ENCODE measurements at regions of chr11 and their contacts with region 1.

Region 1: GRCh38 chr11:8092587-8093424 is 11.8 kb downstream of the TUB start:
- DNase-seq: peak; percentile 48
- H3K4me3 ChIP-seq: no peak overlapping the region
- H3K27ac ChIP-seq: no peak overlapping the region
- H3K4me1 ChIP-seq: no peaks in the 10 kb centered on the region
- H3K27me3 ChIP-seq: no peaks in the 10 kb centered on the region
- CTCF ChIP-seq: peak; percentile 80 to 84

Region 2: DNA sequence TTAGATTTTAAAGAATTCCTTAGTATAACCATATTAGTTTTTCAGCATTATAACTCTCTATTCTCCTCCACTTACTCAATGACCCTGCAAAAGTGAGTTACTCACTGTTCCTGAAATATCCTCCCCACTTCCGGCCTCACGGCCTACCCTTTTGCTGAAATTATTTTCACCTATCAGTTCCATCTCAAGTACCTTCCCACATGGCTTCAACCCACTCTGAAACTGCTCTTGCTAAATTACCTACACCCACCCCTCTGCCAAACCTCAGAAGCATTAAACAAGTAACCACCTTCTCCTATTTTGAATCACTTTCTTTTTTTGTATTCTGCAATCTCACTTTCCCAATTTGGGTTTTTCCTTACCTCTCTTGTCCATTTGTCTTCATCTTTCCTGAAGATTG is 333.8 kb before region 1 on chr11:
- CTCF ChIA-PET with region 1: no interaction called
- dilution Hi-C with region 1: no loop called
- in situ Hi-C with region 1: no loop called
- intact Hi-C with region 1: no loop called
- DNase-seq: peak; percentile 28
- H3K4me3 ChIP-seq: no peak overlapping the region
- H3K27ac ChIP-seq: no peak overlapping the region
- H3K4me1 ChIP-seq: peaks cover 4% of the 10 kb centered on the region
- H3K27me3 ChIP-seq: no peaks in the 10 kb centered on the region
- CTCF ChIP-seq: no peak

Region 3: DNA sequence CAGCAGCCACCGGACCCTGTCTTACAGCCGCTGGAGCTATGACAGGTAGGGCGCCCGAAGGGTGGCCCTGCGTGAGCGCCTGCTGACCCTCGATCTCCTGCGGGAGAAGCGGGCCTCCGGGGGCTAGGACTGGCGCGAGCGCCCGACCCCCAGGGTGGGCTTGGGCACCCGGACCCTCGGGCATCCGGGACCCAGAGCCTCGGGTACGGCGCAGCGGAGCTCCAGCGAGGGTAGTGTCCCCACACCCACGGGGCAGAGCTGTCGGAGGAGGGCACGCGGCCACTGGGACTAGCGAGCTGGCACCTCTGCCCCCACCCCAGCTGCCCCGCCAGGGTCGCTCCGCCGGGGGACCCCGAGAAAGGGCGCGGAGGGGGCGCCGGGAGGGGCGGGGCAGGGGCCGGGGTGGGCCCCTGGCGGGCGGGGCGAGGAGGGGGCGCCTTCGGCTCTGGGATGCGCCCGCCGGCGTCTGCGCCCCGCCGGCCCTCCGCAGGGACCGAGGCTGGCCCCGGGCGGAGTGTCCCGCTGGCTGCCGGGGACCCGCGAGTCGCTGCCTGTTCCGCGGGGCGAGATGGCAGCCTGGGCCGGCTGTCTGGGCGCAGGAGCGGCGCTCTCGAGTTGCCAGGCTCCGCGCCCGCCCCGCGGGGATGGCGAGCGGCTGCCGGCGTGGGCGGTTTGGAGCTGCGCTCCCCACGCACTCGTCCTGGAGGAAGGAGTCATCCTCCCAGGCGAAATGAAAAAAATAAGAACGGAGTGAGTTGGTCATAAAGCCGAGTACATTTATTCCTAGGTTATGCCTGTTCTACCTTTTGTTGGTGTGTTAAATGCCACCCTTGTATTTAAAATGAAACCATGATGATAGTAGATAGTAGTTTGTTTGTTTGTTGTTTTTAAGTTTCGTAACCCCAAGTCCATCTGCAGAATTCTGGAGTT is 73.2 kb before region 1 on chr11:
- CTCF ChIA-PET with region 1: no interaction called
- dilution Hi-C with region 1: no loop called
- in situ Hi-C with region 1: loop called in 1 of 2 experiments (anchors 5 kb)
- intact Hi-C with region 1: no loop called
- DNase-seq: peak; percentile 34
- H3K4me3 ChIP-seq: peak overlapping the region; percentile 39 to 51 (median 40)
- H3K27ac ChIP-seq: no peak overlapping the region
- H3K4me1 ChIP-seq: peaks cover 19% of the 10 kb centered on the region
- H3K27me3 ChIP-seq: no peaks in the 10 kb centered on the region
- CTCF ChIP-seq: no peak

Region 4: DNA sequence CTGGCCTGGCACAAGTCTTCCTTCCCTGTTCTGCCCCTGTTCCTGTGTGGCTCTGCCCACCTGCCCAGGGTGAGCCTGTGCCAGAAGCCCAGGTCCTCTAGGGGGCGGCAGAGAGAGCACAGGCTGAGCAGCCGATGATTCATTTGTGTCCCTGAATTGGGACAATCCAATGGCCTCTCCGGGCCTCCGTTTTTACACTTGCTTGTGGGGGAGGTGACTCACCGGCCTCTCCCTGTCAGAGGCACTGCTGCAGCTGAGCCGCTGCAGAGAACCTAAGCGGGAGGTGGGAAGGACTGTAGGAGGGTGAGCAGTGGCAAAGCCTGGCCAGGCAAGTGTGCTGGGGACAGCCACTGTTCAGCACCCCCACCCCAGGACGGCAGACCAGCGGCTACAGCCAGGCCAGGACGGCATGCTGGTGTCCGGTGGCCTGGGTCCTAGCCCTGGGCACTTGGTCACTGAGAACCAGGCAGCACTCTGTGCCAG is 236.1 kb after region 1 on chr11:
- CTCF ChIA-PET with region 1: no interaction called
- dilution Hi-C with region 1: no loop called
- in situ Hi-C with region 1: no loop called
- intact Hi-C with region 1: no loop called
- DNase-seq: peak; percentile 88
- H3K4me3 ChIP-seq: no peak overlapping the region
- H3K27ac ChIP-seq: no peak overlapping the region
- H3K4me1 ChIP-seq: peaks cover 7% of the 10 kb centered on the region
- H3K27me3 ChIP-seq: no peaks in the 10 kb centered on the region
- CTCF ChIP-seq: peak; percentile 83 to 94